Caco-2 (cell line): ENCODE measurements at regions of chr5 and their contacts with region 1.

Region 1: GRCh38 chr5:7391814-7392692 is 3.9 kb upstream of the ADCY2 start:
- DNase-seq: peak in 1 of 2 experiments; percentile 33
- H3K4me3 ChIP-seq: no peak overlapping the region
- H3K4me3 Mint-ChIP-seq: no peak overlapping the region
- H3K27ac Mint-ChIP-seq: no peak overlapping the region
- H3K4me1 ChIP-seq: no peaks in the 10 kb centered on the region
- H3K4me1 Mint-ChIP-seq: no peaks in the 10 kb centered on the region
- H3K27me3 ChIP-seq: no peaks in the 10 kb centered on the region
- H3K27me3 Mint-ChIP-seq: peaks cover 12% of the 10 kb centered on the region
- CTCF ChIP-seq: peak; percentile 32 to 65

Region 2: GRCh38 chr5:6820851-6821479 is 571.1 kb before region 1 on chr5:
- CTCF ChIA-PET with region 1: no interaction called
- POLR2A ChIA-PET with region 1: no interaction called
- intact Hi-C with region 1: loop called (anchors 5 kb)
- DNase-seq: peak in 1 of 2 experiments; percentile 53
- H3K4me3 ChIP-seq: no peak overlapping the region
- H3K4me3 Mint-ChIP-seq: no peak overlapping the region
- H3K27ac Mint-ChIP-seq: no peak overlapping the region
- H3K4me1 ChIP-seq: no peaks in the 10 kb centered on the region
- H3K4me1 Mint-ChIP-seq: no peaks in the 10 kb centered on the region
- H3K27me3 ChIP-seq: no peaks in the 10 kb centered on the region; the same call in 1 of the 2 replicates
- H3K27me3 Mint-ChIP-seq: peaks cover 21% of the 10 kb centered on the region
- CTCF ChIP-seq: peak; percentile 61 to 75

Region 3: DNA sequence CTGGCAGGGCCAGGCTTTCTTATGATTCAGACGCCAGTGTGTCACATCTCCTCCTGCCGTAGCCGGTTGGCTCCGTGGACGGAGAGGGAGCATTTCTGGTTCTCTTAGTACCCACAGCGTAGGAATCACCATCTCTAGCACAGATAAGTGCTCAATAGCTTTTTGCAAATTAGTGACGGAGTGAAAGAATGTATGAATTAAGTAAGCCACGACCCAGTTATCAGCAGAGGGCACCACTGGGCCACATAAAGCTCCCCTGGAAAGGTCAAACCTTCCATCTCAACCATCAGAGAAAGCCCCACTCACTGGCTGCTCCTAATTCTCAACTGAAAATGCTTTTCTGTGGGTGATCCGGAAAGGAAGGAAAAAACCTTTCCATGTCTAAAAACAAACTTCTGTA is 313.2 kb before region 1 on chr5:
- CTCF ChIA-PET with region 1: no interaction called
- POLR2A ChIA-PET with region 1: no interaction called
- intact Hi-C with region 1: loop called (anchors 5 kb)
- DNase-seq: peak in 1 of 2 experiments; percentile 19
- H3K4me3 ChIP-seq: no peak overlapping the region
- H3K4me3 Mint-ChIP-seq: no peak overlapping the region
- H3K27ac Mint-ChIP-seq: no peak overlapping the region
- H3K4me1 ChIP-seq: no peaks in the 10 kb centered on the region
- H3K4me1 Mint-ChIP-seq: no peaks in the 10 kb centered on the region
- H3K27me3 ChIP-seq: no peaks in the 10 kb centered on the region
- H3K27me3 Mint-ChIP-seq: no peaks in the 10 kb centered on the region
- CTCF ChIP-seq: peak; percentile 31 to 57

Region 4: GRCh38 chr5:7422317-7423106 is 30.5 kb after region 1 on chr5:
- CTCF ChIA-PET with region 1: no interaction called
- POLR2A ChIA-PET with region 1: no interaction called
- intact Hi-C with region 1: no loop called
- DNase-seq: no peak
- H3K4me3 ChIP-seq: no peak overlapping the region
- H3K4me3 Mint-ChIP-seq: no peak overlapping the region
- H3K27ac Mint-ChIP-seq: no peak overlapping the region
- H3K4me1 ChIP-seq: no peaks in the 10 kb centered on the region
- H3K4me1 Mint-ChIP-seq: no peaks in the 10 kb centered on the region
- H3K27me3 ChIP-seq: no peaks in the 10 kb centered on the region
- H3K27me3 Mint-ChIP-seq: no peaks in the 10 kb centered on the region
- CTCF ChIP-seq: no peak

Region 5: GRCh38 chr5:7745882-7746610 is 354.0 kb after region 1 on chr5:
- CTCF ChIA-PET with region 1: no interaction called
- POLR2A ChIA-PET with region 1: no interaction called
- intact Hi-C with region 1: loop called (anchors 10 kb)
- DNase-seq: peak; percentile 72 to 77
- H3K4me3 ChIP-seq: no peak overlapping the region
- H3K4me3 Mint-ChIP-seq: no peak overlapping the region
- H3K27ac Mint-ChIP-seq: no peak overlapping the region
- H3K4me1 ChIP-seq: no peaks in the 10 kb centered on the region
- H3K4me1 Mint-ChIP-seq: no peaks in the 10 kb centered on the region
- H3K27me3 ChIP-seq: no peaks in the 10 kb centered on the region
- H3K27me3 Mint-ChIP-seq: peaks cover 16% of the 10 kb centered on the region
- CTCF ChIP-seq: peak; percentile 76 to 89